WTC11 (cell line): ENCODE measurements at regions of chr6 and their contacts with region 1.

Region 1: GRCh38 chr6:26031595-26032339 is 55.5 kb upstream of the HFE start:
- DNase-seq: peak; percentile 80
- ATAC-seq: peak; percentile 67
- H3K4me3 Mint-ChIP-seq: peak overlapping the region; percentile 91
- H3K27ac Mint-ChIP-seq: peak overlapping the region; percentile 100
- H3K4me1 Mint-ChIP-seq: peaks cover 59% of the 10 kb centered on the region
- H3K27me3 Mint-ChIP-seq: no peaks in the 10 kb centered on the region
- CTCF ChIP-seq: no peak

Region 2: GRCh38 chr6:26054857-26055669 is 23.3 kb after region 1 on chr6:
- CTCF ChIA-PET with region 1: no interaction called
- POLR2A ChIA-PET with region 1: interaction called, 365 read pairs
- DNase-seq: peak; percentile 74
- ATAC-seq: peak; percentile 66
- H3K4me3 Mint-ChIP-seq: peak overlapping the region; percentile 89
- H3K27ac Mint-ChIP-seq: peak overlapping the region; percentile 98
- H3K4me1 Mint-ChIP-seq: peaks cover 29% of the 10 kb centered on the region
- H3K27me3 Mint-ChIP-seq: no peaks in the 10 kb centered on the region
- CTCF ChIP-seq: no peak

Region 3: GRCh38 chr6:26234421-26235296 is 202.9 kb after region 1 on chr6:
- CTCF ChIA-PET with region 1: no interaction called
- POLR2A ChIA-PET with region 1: interaction called, 21 read pairs
- DNase-seq: no peak
- ATAC-seq: peak; percentile 70
- H3K4me3 Mint-ChIP-seq: peak overlapping the region; percentile 94
- H3K27ac Mint-ChIP-seq: peak overlapping the region; percentile 99
- H3K4me1 Mint-ChIP-seq: peaks cover 33% of the 10 kb centered on the region
- H3K27me3 Mint-ChIP-seq: no peaks in the 10 kb centered on the region
- CTCF ChIP-seq: no peak

Region 4: GRCh38 chr6:27825025-27825793 is 1793.4 kb after region 1 on chr6:
- CTCF ChIA-PET with region 1: no interaction called
- POLR2A ChIA-PET with region 1: interaction called, 13 read pairs
- DNase-seq: no peak
- ATAC-seq: no peak
- H3K4me3 Mint-ChIP-seq: peak overlapping the region; percentile 86
- H3K27ac Mint-ChIP-seq: peak overlapping the region; percentile 99
- H3K4me1 Mint-ChIP-seq: peaks cover 27% of the 10 kb centered on the region
- H3K27me3 Mint-ChIP-seq: no peaks in the 10 kb centered on the region
- CTCF ChIP-seq: no peak

Region 5: GRCh38 chr6:27871924-27872638 is 1840.3 kb after region 1 on chr6:
- CTCF ChIA-PET with region 1: no interaction called
- POLR2A ChIA-PET with region 1: interaction called, 64 read pairs
- DNase-seq: peak; percentile 79
- ATAC-seq: peak; percentile 58
- H3K4me3 Mint-ChIP-seq: peak overlapping the region; percentile 94
- H3K27ac Mint-ChIP-seq: peak overlapping the region; percentile 99
- H3K4me1 Mint-ChIP-seq: peaks cover 50% of the 10 kb centered on the region
- H3K27me3 Mint-ChIP-seq: no peaks in the 10 kb centered on the region
- CTCF ChIP-seq: no peak